ENCODE measurements at regions of chr16 and their contacts with region 1.

Region 1: GRCh38 chr16:27203429-27204231 is at the start of gene KDM8:
- DNase-seq: peak; percentile 96 to 100 (median 100)
- ATAC-seq: peak; percentile 88
- H3K4me3 ChIP-seq: peak within 1 kb of the TSS; percentile 97
- H3K4me3 Mint-ChIP-seq: peak within 1 kb of the TSS; percentile 91 to 100 (median 98)
- H3K27ac ChIP-seq: peak within 1 kb of the TSS; percentile 93
- H3K27ac Mint-ChIP-seq: peak within 1 kb of the TSS; percentile 94 to 100 (median 100)
- H3K4me1 ChIP-seq: peaks cover 40 to 50% of the 10 kb centered on the region in 2 donors
- H3K4me1 Mint-ChIP-seq: peaks cover 41 to 70% (median 60%) of the 10 kb centered on the region in 7 donors
- H3K27me3 ChIP-seq: no peaks in the 10 kb centered on the region
- H3K27me3 Mint-ChIP-seq: peaks cover 0 to 3% (median 0%) of the 10 kb centered on the region in 5 donors
- total RNA-seq, gene KDM8: 15.6 to 34.4 (median 19.0) TPM

Region 2: GRCh38 chr16:27040732-27041131 is 162.9 kb before region 1 on chr16:
- CTCF ChIA-PET with region 1: no interaction called
- POLR2A ChIA-PET with region 1: no interaction called
- intact Hi-C with region 1: no loop called
- DNase-seq: no peak
- ATAC-seq: no peak
- H3K4me3 ChIP-seq: no peak overlapping the region
- H3K4me3 Mint-ChIP-seq: no peak overlapping the region
- H3K27ac ChIP-seq: no peak overlapping the region
- H3K27ac Mint-ChIP-seq: no peak overlapping the region
- H3K4me1 ChIP-seq: no peaks in the 10 kb centered on the region
- H3K4me1 Mint-ChIP-seq: no peaks in the 10 kb centered on the region
- H3K27me3 ChIP-seq: no peaks in the 10 kb centered on the region
- H3K27me3 Mint-ChIP-seq: peaks cover 0 to 20% (median 12%) of the 10 kb centered on the region in 5 donors

Region 3: DNA sequence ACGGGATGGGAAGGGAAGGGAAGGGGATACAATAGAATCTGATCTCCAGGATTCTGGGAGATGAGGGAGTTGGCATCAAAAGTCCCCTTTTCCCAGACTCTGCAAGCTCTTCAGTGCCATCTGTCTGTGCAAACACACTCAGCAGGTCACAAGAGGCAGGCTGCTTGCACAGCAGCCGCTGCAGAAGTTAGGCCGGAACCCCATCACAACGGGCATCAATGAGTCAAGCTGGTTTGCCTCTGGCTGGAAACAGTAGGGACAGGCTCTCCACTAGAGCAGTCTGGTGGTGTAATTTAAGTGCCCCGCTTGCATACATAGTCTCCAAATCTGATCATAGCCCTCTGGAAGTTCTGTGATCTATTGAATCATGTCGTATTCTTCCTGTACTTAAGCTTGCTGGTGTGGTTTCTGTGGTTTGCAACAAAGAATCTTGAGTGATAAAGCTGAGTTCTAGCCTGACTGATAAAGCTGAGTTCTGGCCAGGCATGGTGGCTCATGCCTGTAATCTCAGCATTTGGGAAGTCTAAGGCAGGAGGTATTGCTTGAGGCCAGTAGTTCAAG is 34.0 kb before region 1 on chr16:
- CTCF ChIA-PET with region 1: interaction called, 11 read pairs
- POLR2A ChIA-PET with region 1: interaction called, 24 read pairs
- intact Hi-C with region 1: loop called in 1 of 2 experiments (anchors 5 kb)
- DNase-seq: peak; percentile 32 to 92 (median 88)
- ATAC-seq: peak; percentile 94
- H3K4me3 ChIP-seq: peak overlapping the region; percentile 7
- H3K4me3 Mint-ChIP-seq: peak overlapping the region; percentile 38 to 78 (median 70)
- H3K27ac ChIP-seq: peak overlapping the region; percentile 64
- H3K27ac Mint-ChIP-seq: peak overlapping the region; percentile 67 to 96 (median 91)
- H3K4me1 ChIP-seq: peaks cover 53 to 60% of the 10 kb centered on the region in 2 donors
- H3K4me1 Mint-ChIP-seq: peaks cover 38 to 78% (median 74%) of the 10 kb centered on the region in 7 donors
- H3K27me3 ChIP-seq: no peaks in the 10 kb centered on the region
- H3K27me3 Mint-ChIP-seq: peaks cover 0 to 3% (median 0%) of the 10 kb centered on the region in 5 donors

Region 4: GRCh38 chr16:27189335-27189972 is 14.2 kb before region 1 on chr16:
- CTCF ChIA-PET with region 1: interaction called, 3 read pairs
- POLR2A ChIA-PET with region 1: interaction called, 39 read pairs
- intact Hi-C with region 1: no loop called
- DNase-seq: no peak
- ATAC-seq: no peak
- H3K4me3 ChIP-seq: no peak overlapping the region
- H3K4me3 Mint-ChIP-seq: no peak overlapping the region
- H3K27ac ChIP-seq: no peak overlapping the region
- H3K27ac Mint-ChIP-seq: peak overlapping the region in 2 of 9 donors; percentile 18 to 91
- H3K4me1 ChIP-seq: peaks cover 0 to 7% of the 10 kb centered on the region in 2 donors
- H3K4me1 Mint-ChIP-seq: peaks cover 13 to 39% (median 28%) of the 10 kb centered on the region in 7 donors
- H3K27me3 ChIP-seq: no peaks in the 10 kb centered on the region
- H3K27me3 Mint-ChIP-seq: no peaks in the 10 kb centered on the region

Region 5: DNA sequence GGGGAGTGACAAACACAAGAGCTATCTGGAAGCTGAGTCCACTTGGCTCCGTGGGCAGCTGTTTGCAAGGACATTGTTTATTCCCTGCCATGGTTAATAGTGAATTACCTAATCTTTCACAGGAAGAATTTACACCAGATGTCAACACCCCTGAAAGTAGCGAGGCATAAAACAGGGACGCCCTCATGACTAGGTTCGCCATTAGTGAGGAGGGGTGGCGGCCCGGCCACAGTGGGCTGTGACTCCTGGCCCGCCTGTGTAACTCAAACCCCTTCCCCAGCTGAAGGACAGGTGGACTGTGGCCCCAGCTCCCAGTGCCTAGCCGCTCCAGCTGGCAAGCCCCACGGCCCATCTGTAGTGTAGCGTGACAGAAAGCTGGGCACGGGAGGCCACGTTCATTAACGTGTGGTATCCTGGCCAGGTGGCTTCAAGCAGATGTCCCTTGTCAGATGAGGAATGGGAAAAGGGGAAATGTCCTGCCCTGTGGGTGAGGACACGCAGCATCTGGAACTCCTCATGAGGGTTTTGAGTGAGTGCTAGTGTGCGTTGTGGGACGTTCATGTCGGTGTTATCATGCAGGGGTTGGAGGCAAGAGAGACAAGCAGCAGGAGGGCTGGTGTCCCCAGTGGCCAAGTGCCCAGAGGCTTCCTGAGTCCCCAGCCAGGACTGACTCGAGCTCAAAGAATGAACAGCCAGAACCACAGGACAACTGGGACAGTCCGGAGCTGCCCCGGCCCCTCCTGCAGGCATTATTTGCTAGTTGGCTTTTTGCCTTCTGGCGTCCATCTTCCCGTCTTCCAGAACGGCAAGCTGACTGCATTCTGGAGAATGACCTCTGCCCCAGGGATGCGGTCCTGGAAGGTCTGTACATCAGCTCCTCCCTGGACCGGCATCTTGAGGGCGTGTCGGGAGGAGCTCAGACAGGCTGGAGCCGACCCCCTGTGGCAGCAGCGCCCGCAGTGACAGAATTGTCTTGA is 18.9 kb after region 1 on chr16:
- CTCF ChIA-PET with region 1: interaction called, 3 read pairs
- POLR2A ChIA-PET with region 1: interaction called, 48 read pairs
- intact Hi-C with region 1: no loop called
- DNase-seq: no peak
- ATAC-seq: no peak
- H3K4me3 ChIP-seq: no peak overlapping the region
- H3K4me3 Mint-ChIP-seq: no peak overlapping the region
- H3K27ac ChIP-seq: no peak overlapping the region
- H3K27ac Mint-ChIP-seq: peak overlapping the region in 6 of 9 donors; percentile 76 to 91 (median 78)
- H3K4me1 ChIP-seq: no peaks in the 10 kb centered on the region
- H3K4me1 Mint-ChIP-seq: peaks cover 10 to 32% (median 23%) of the 10 kb centered on the region in 7 donors
- H3K27me3 ChIP-seq: no peaks in the 10 kb centered on the region
- H3K27me3 Mint-ChIP-seq: no peaks in the 10 kb centered on the region

Region 6: GRCh38 chr16:27318392-27319226 is 115.0 kb after region 1 on chr16:
- CTCF ChIA-PET with region 1: interaction called, 5 read pairs
- POLR2A ChIA-PET with region 1: interaction called, 10 read pairs
- intact Hi-C with region 1: no loop called
- DNase-seq: peak; percentile 22 to 77 (median 52)
- ATAC-seq: peak; percentile 61
- H3K4me3 ChIP-seq: peak overlapping the region; percentile 63
- H3K4me3 Mint-ChIP-seq: peak overlapping the region; percentile 85 to 99 (median 97)
- H3K27ac ChIP-seq: peak overlapping the region; percentile 99
- H3K27ac Mint-ChIP-seq: peak overlapping the region; percentile 92 to 99 (median 95)
- H3K4me1 ChIP-seq: peaks cover 37 to 43% of the 10 kb centered on the region in 2 donors
- H3K4me1 Mint-ChIP-seq: peaks cover 67 to 85% (median 75%) of the 10 kb centered on the region in 7 donors
- H3K27me3 ChIP-seq: no peaks in the 10 kb centered on the region
- H3K27me3 Mint-ChIP-seq: no peaks in the 10 kb centered on the region

Region 7: GRCh38 chr16:27549859-27550581 is 346.4 kb after region 1 on chr16 and contains the starts of genes GTF3C1 and KATNIP:
- CTCF ChIA-PET with region 1: no interaction called
- POLR2A ChIA-PET with region 1: no interaction called
- intact Hi-C with region 1: loop called in 1 of 2 experiments (anchors 1 kb)
- DNase-seq: peak; percentile 100
- ATAC-seq: peak; percentile 100
- H3K4me3 ChIP-seq: peak within 1 kb of the TSS; percentile 100
- H3K4me3 Mint-ChIP-seq: peak within 1 kb of the TSS; percentile 95 to 98 (median 97)
- H3K27ac ChIP-seq: peak within 1 kb of the TSS; percentile 85
- H3K27ac Mint-ChIP-seq: peak within 1 kb of the TSS; percentile 94 to 99 (median 98)
- H3K4me1 ChIP-seq: peaks cover 21 to 22% of the 10 kb centered on the region in 2 donors
- H3K4me1 Mint-ChIP-seq: peaks cover 26 to 51% (median 44%) of the 10 kb centered on the region in 7 donors
- H3K27me3 ChIP-seq: no peaks in the 10 kb centered on the region
- H3K27me3 Mint-ChIP-seq: peaks cover 0 to 2% (median 0%) of the 10 kb centered on the region in 5 donors
- total RNA-seq, gene GTF3C1: 51.8 to 60.0 (median 52.6) TPM
- total RNA-seq, gene KATNIP: 18.7 to 39.0 (median 21.3) TPM